ENCODE measurements at regions of chr11 and their contacts with region 1.

Region 1: GRCh38 chr11:61332797-61333549 is at the starts of genes DDB1 and TKFC:
- DNase-seq: peak; percentile 96 to 99 (median 97)
- H3K4me3 ChIP-seq: peak within 1 kb of the TSS; percentile 91
- H3K4me3 Mint-ChIP-seq: peak within 1 kb of the TSS; percentile 92 to 98 (median 95)
- H3K27ac ChIP-seq: peak within 1 kb of the TSS; percentile 94
- H3K27ac Mint-ChIP-seq: peak within 1 kb of the TSS; percentile 96 to 100 (median 98)
- H3K4me1 ChIP-seq: peaks cover 39% of the 10 kb centered on the region
- H3K4me1 Mint-ChIP-seq: peaks cover 53 to 71% (median 58%) of the 10 kb centered on the region in 3 donors
- H3K27me3 ChIP-seq: no peaks in the 10 kb centered on the region
- H3K27me3 Mint-ChIP-seq: peaks cover 0 to 3% of the 10 kb centered on the region in 2 donors
- total RNA-seq, gene DDB1: 302 to 307 TPM
- total RNA-seq, gene TKFC: 66.8 to 72.4 TPM

Region 2: DNA sequence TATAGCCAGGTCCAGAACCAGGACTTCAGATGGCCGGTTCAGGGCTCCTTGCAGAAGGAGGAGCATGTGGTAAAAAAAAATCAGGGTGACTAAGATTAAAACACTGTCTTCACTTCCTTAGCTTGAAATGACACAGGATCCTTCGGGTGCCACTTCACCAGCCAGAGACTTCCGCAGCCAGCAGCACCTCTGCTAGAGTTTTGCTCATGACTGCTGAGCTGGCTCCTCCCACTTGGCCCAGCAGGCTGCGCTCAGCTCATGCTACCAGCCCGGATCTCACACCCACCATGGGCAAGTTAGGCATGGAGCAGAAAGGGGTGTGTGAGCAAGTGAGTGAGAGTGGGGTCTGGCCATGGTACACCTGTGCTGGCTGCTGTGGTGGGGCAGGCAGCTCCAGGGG is 615.0 kb before region 1 on chr11:
- CTCF ChIA-PET with region 1: no interaction called
- POLR2A ChIA-PET with region 1: no interaction called
- DNase-seq: peak in 3 of 5 donors; percentile 1 to 49 (median 15)
- H3K4me3 ChIP-seq: no peak overlapping the region
- H3K4me3 Mint-ChIP-seq: peak overlapping the region in 1 of 7 donors; percentile 19
- H3K27ac ChIP-seq: no peak overlapping the region
- H3K27ac Mint-ChIP-seq: no peak overlapping the region
- H3K4me1 ChIP-seq: no peaks in the 10 kb centered on the region
- H3K4me1 Mint-ChIP-seq: peaks cover 0 to 6% (median 0%) of the 10 kb centered on the region in 3 donors
- H3K27me3 ChIP-seq: no peaks in the 10 kb centered on the region
- H3K27me3 Mint-ChIP-seq: peaks cover 10 to 65% of the 10 kb centered on the region in 2 donors

Region 3: GRCh38 chr11:61270354-61271076 is 62.5 kb before region 1 on chr11:
- CTCF ChIA-PET with region 1: no interaction called
- POLR2A ChIA-PET with region 1: no interaction called
- DNase-seq: no peak
- H3K4me3 ChIP-seq: no peak overlapping the region
- H3K4me3 Mint-ChIP-seq: no peak overlapping the region
- H3K27ac ChIP-seq: no peak overlapping the region
- H3K27ac Mint-ChIP-seq: no peak overlapping the region
- H3K4me1 ChIP-seq: no peaks in the 10 kb centered on the region
- H3K4me1 Mint-ChIP-seq: no peaks in the 10 kb centered on the region
- H3K27me3 ChIP-seq: no peaks in the 10 kb centered on the region
- H3K27me3 Mint-ChIP-seq: peaks cover 0 to 4% of the 10 kb centered on the region in 2 donors

Region 4: GRCh38 chr11:61361686-61362541 is 28.9 kb after region 1 on chr11 and contains the starts of genes CYB561A3 and TMEM138:
- CTCF ChIA-PET with region 1: interaction called, 78 read pairs
- POLR2A ChIA-PET with region 1: interaction called, 42 read pairs
- DNase-seq: peak; percentile 79 to 92 (median 84)
- H3K4me3 ChIP-seq: peak within 1 kb of the TSS; percentile 91
- H3K4me3 Mint-ChIP-seq: peak within 1 kb of the TSS; percentile 95 to 99 (median 96)
- H3K27ac ChIP-seq: peak within 1 kb of the TSS; percentile 88
- H3K27ac Mint-ChIP-seq: peak within 1 kb of the TSS; percentile 91 to 100 (median 98)
- H3K4me1 ChIP-seq: peaks cover 29% of the 10 kb centered on the region
- H3K4me1 Mint-ChIP-seq: peaks cover 29 to 44% (median 39%) of the 10 kb centered on the region in 3 donors
- H3K27me3 ChIP-seq: no peaks in the 10 kb centered on the region
- H3K27me3 Mint-ChIP-seq: no peaks in the 10 kb centered on the region
- total RNA-seq, gene CYB561A3: 53.0 to 53.7 TPM
- total RNA-seq, gene TMEM138: 74.4 to 75.1 TPM

Region 5: GRCh38 chr11:61384271-61385242 is 51.6 kb after region 1 on chr11:
- CTCF ChIA-PET with region 1: interaction called, 159 read pairs
- POLR2A ChIA-PET with region 1: interaction called, 16 read pairs
- DNase-seq: no peak
- H3K4me3 ChIP-seq: no peak overlapping the region
- H3K4me3 Mint-ChIP-seq: peak overlapping the region in 1 of 7 donors; percentile 44
- H3K27ac ChIP-seq: no peak overlapping the region
- H3K27ac Mint-ChIP-seq: no peak overlapping the region
- H3K4me1 ChIP-seq: peaks cover 6% of the 10 kb centered on the region
- H3K4me1 Mint-ChIP-seq: peaks cover 6 to 8% (median 7%) of the 10 kb centered on the region in 3 donors
- H3K27me3 ChIP-seq: no peaks in the 10 kb centered on the region
- H3K27me3 Mint-ChIP-seq: no peaks in the 10 kb centered on the region

Region 6: GRCh38 chr11:61429691-61430582 is 97.0 kb after region 1 on chr11 and contains the starts of genes CPSF7 and SDHAF2:
- CTCF ChIA-PET with region 1: interaction called, 29 read pairs
- POLR2A ChIA-PET with region 1: interaction called, 13 read pairs
- DNase-seq: peak; percentile 97 to 98 (median 97)
- H3K4me3 ChIP-seq: peak within 1 kb of the TSS; percentile 93
- H3K4me3 Mint-ChIP-seq: peak within 1 kb of the TSS; percentile 91 to 100 (median 97)
- H3K27ac ChIP-seq: peak within 1 kb of the TSS; percentile 97
- H3K27ac Mint-ChIP-seq: peak within 1 kb of the TSS; percentile 97 to 100 (median 99)
- H3K4me1 ChIP-seq: peaks cover 52% of the 10 kb centered on the region
- H3K4me1 Mint-ChIP-seq: peaks cover 58 to 81% (median 77%) of the 10 kb centered on the region in 3 donors
- H3K27me3 ChIP-seq: no peaks in the 10 kb centered on the region
- H3K27me3 Mint-ChIP-seq: peaks cover 0 to 7% of the 10 kb centered on the region in 2 donors
- total RNA-seq, gene CPSF7: 128 to 140 TPM
- total RNA-seq, gene SDHAF2: 48.8 to 49.2 TPM